Activated T-helper 2 cell treated with anti-CD3 and anti-CD28 coated beads, Interferon-gamma antibody, Interleukin-2, Interleukin-4, amounts not matched to agents 10 μg/mL and 5 μg/mL and 100 μg/mL, durations not matched to agents 14 hours and 24 hours and 36 hours (primary cell): ENCODE measurements at regions of chr9 and their contacts with region 1.

Region 1: DNA sequence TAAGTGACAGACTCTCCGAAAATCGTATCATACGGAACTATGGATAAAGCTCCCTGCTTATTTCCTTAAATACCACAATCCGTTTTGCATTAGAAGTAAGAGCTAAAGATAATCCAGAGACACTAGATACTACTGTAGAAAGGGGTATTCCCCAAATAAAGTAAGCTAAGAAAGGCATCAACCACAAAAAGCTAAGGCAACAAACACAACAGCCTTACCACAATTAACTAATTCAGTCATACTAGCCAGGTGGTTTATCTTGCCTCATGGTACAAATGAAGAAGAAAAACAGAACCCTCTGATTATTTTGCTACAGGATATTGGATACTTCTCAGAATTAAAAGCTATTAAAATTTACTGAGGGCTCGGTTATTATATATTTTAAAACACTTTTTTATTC is 14.1 kb downstream of the ERP44 start:
- DNase-seq: no peak
- H3K4me3 Mint-ChIP-seq: no peak overlapping the region
- H3K27ac Mint-ChIP-seq: peak overlapping the region; percentile 67
- H3K4me1 Mint-ChIP-seq: peaks cover 65% of the 10 kb centered on the region
- H3K27me3 Mint-ChIP-seq: no peaks in the 10 kb centered on the region

Region 2: GRCh38 chr9:100098887-100099721 is 14.4 kb after region 1 on chr9 and contains the starts of genes ERP44 and INVS:
- intact Hi-C with region 1: loop called (anchors 1 kb)
- DNase-seq: peak; percentile 97
- H3K4me3 Mint-ChIP-seq: peak within 1 kb of the TSS; percentile 96
- H3K27ac Mint-ChIP-seq: peak within 1 kb of the TSS; percentile 91
- H3K4me1 Mint-ChIP-seq: peaks cover 27% of the 10 kb centered on the region
- H3K27me3 Mint-ChIP-seq: no peaks in the 10 kb centered on the region
- total RNA-seq, gene ERP44: 21.5 and 22.0 TPM in 2 replicates
- total RNA-seq, gene INVS: 18.8 and 20.5 TPM in 2 replicates

Region 3: DNA sequence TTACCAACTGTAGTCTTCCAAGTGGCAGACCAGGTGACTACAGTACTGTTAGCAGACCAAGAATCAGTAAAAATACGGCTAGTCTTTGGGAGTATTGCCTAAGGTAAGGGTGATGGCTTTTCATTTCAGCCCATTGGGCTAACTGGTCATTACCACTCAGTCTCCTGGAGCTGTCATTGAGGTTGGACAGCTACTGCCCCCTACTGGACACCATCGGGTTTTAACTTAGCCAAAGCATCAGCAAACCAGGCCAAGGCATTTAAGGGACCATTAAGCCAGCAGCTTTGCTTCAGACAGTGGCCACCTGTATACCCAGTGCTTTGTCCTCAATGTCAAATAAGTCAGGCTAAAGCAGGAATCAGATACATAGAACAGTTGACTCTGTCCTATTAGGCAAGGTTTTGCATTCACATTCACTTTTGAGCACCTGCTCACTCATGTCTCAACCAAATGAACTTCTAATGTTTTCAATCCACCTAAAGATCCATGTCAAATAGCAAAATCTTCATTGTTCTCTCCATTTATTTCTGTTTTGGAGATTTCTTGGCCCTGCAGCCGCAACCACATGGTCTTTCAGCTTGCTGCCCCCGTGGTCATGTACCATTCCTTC is 131.5 kb after region 1 on chr9:
- intact Hi-C with region 1: loop called (anchors 5 kb)
- DNase-seq: peak; percentile 49
- H3K4me3 Mint-ChIP-seq: no peak overlapping the region
- H3K27ac Mint-ChIP-seq: no peak overlapping the region
- H3K4me1 Mint-ChIP-seq: peaks cover 10% of the 10 kb centered on the region
- H3K27me3 Mint-ChIP-seq: no peaks in the 10 kb centered on the region

Region 4: GRCh38 chr9:100269656-100270055 is 184.9 kb after region 1 on chr9:
- intact Hi-C with region 1: no loop called
- DNase-seq: no peak
- H3K4me3 Mint-ChIP-seq: no peak overlapping the region
- H3K27ac Mint-ChIP-seq: no peak overlapping the region
- H3K4me1 Mint-ChIP-seq: peaks cover 2% of the 10 kb centered on the region
- H3K27me3 Mint-ChIP-seq: no peaks in the 10 kb centered on the region